ENCODE measurements at regions of chr16 and their contacts with region 1.

Region 1: DNA sequence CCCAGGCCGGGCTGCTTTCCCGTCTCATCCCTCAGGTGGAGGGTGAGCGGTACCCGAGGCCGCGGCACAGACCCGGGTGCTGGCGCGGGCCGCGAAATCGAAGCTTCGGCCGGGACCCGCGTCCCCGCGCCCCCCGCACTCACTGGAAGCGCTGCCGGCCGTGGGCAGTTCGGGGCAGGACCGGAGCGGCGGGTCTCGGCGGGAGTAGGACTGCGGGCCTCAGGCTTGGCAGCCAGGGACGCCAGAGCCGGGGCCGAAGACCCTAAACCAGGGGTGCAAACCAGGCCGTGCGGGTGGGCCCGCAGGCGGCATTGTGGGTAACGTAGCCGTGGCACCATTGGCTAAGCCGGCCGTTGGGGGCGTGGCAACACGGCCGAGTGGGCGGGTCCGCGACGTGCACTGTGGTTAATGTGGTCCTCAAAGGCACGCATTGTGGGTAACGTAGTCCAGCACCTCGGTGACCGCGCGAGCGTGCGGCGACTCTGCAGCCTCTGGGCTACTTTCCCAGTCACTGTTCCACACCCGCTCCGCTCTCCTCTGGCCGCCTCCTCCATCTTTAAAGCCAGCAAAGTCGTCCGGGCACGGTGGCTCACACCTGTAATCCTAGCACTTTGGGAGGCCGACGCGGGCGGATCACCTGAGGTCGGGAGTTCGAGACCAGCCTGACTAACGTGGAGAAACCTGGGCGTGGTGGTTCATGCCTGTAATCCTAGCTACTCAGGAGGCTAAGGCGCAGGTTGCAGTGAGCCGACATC is at the start of gene ZNF500:
- H3K4me3 Mint-ChIP-seq: peak within 1 kb of the TSS; percentile 89
- H3K27ac Mint-ChIP-seq: peak within 1 kb of the TSS; percentile 90
- H3K4me1 Mint-ChIP-seq: peaks cover 53% of the 10 kb centered on the region
- H3K27me3 Mint-ChIP-seq: no peaks in the 10 kb centered on the region

Region 2: GRCh38 chr16:4734063-4734729 is 32.9 kb before region 1 on chr16 and contains the starts of genes ANKS3 and DNAAF8:
- intact Hi-C with region 1: loop called (anchors 1 kb)
- H3K4me3 Mint-ChIP-seq: peak within 1 kb of the TSS; percentile 99
- H3K27ac Mint-ChIP-seq: peak within 1 kb of the TSS; percentile 91
- H3K4me1 Mint-ChIP-seq: peaks cover 20% of the 10 kb centered on the region
- H3K27me3 Mint-ChIP-seq: no peaks in the 10 kb centered on the region

Region 3: GRCh38 chr16:4802659-4803287 is 35.7 kb after region 1 on chr16:
- intact Hi-C with region 1: loop called (anchors 1 kb)
- H3K4me3 Mint-ChIP-seq: peak overlapping the region; percentile 92
- H3K27ac Mint-ChIP-seq: peak overlapping the region; percentile 97
- H3K4me1 Mint-ChIP-seq: peaks cover 63% of the 10 kb centered on the region
- H3K27me3 Mint-ChIP-seq: no peaks in the 10 kb centered on the region

Region 4: DNA sequence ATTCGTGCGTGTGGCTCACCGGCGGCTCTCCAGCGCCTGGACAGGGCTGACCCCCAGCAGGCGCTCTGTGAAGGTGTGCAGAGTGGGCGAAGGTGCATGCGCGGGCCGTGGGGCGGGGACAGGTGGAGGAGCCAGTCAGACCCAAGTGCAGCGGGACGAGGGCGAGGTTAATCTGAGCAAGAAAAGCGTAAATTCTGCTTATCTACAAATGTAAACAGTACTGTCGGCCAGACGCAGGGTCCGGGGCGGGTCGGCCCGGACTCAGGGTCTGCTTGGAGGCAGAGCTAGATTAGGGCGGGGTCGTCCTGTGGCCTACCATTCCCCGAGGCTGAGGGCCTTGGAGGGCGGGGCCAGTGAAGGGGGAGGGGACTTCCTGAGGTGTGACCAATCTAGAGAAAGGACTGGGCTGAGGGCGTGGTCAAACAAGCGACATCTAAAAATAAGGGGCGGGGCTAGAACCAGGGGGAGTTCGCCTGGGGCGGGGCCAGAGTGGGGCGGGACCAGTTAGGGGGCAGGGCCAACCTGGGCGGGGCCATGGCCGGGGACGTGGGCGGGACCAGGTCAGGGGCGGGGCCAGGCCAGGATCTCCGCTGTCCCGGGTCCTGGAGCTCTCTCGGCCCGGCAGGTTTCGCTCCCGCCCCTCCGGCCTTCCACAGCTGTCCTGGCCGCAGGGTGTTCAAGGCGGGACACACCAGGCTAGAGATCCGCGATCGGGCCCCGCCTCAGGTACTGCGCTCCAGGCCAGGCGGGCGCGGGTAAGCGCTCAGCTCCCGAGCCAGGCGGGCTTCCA is 190.9 kb after region 1 on chr16 and contains the start of gene SEC14L5:
- intact Hi-C with region 1: loop called (anchors 5 kb)
- H3K4me3 Mint-ChIP-seq: peak within 1 kb of the TSS; percentile 87
- H3K27ac Mint-ChIP-seq: peak within 1 kb of the TSS; percentile 77
- H3K4me1 Mint-ChIP-seq: peaks cover 27% of the 10 kb centered on the region
- H3K27me3 Mint-ChIP-seq: peaks cover 64% of the 10 kb centered on the region